GM18951 (cell line): ENCODE measurements at regions of chr1 and their contacts with region 1.

Region 1: DNA sequence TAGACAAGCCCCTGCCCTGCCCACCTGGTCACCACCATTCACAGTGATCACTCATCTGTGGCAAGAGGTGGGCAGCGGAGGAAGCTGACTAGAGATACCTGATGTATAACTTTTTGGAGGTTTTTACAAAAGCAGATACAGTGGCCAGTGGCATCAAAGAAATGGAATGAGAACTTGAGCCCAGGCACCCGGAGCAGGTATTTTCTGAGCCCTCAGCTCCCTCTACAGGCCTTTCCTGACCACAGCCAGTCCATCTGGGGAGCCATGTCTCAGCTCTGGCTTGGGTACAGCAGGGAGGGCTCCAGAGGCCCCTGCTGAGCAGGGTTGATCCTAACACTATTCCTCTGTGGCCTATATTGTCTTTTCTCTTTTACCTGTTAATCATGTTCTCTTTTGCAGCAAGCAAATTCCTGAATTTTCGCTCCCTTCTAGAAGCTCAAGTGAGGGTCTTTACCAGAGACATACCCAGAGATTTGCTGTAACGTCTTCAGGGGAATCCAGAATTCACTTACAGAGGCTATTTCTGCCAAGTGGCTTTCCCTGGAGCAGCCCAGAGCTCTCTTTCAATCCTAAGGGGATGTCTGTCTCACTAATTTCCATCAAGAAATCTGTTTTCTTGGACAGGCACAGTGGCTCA is 27.3 kb downstream of the GPR157 start:
- POLR2A ChIP-seq: no peak

Region 2: GRCh38 chr1:8776104-8776503 is 325.5 kb before region 1 on chr1:
- in situ Hi-C with region 1: no loop called
- POLR2A ChIP-seq: no peak

Region 3: GRCh38 chr1:9009438-9010370 is 91.9 kb before region 1 on chr1:
- in situ Hi-C with region 1: loop called (anchors 10 kb)
- POLR2A ChIP-seq: peak; percentile 22

Region 4: DNA sequence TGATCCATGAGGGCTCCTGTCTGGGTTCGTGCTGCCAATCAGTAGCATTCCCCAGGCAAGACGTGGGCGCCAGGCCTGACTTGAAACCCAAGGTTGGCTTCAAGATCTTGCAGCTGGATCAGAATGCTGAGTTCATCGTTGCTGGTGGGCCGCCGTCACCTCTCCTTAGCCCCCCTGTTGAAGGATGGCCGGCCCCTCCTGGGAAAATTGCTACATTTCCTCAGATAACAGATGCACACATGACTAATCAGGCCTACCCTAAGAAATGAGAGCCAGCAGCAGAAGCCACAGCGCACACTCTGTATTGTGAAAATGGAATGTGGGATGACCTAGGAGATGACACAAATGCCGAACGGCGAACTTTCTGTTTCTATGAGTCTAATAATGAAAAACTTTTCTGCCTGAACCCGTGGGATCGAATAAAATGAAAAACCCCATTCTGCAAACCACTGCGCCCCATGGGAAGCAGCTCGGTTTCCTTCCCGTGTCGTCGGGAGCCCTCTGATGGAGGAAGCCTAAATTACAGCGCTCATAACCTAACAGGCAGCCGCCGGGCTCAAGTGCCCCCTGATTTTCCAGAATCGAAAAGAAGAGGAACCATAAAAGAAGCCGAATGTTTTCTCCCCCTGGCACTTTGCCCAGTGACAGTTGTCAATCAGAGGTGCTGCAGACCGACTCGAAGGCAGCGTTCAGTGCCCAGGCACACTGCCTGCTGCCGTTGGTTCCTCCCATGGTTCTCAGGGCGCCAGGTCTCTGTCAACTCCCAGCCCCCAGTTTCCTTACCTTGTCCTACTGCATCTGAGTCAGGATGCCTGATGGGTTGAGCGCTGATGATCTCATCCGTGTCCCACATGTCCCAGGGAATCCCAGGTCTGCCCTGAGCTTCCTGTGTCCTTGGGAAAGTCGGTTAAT is 94.8 kb after region 1 on chr1:
- in situ Hi-C with region 1: loop called (anchors 10 kb)
- POLR2A ChIP-seq: no peak